ENCODE measurements at regions of chr10 and their contacts with region 1.

Region 1: DNA sequence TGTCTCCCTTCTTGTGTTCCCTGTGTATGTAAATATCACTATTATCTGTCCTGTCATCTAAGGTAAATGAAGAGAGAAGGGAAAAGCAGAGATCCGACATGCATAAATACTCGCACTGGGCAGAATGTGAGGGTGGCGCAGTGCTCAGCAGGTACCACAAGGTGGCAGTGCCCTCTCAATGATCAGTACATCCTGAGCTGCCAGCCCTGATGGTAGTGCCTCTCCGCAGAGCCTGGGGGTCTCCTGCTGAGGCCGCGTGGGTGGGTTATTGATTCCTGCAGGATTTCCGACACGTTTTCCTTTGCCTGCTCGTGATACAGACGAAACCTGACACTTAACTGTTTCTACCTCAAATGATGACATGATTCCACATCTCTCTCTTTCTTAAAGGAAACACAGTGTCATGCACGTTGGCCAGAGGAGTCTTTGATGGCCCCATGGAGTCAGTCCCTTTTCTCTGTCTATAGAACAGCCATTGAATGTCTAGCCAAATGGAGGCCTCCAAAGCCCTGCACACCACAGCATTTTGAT is 19.8 kb downstream of the RGR start:
- DNase-seq: peak; percentile 66
- H3K4me3 ChIP-seq: no peak overlapping the region
- H3K27ac ChIP-seq: no peak overlapping the region
- H3K4me1 ChIP-seq: no peaks in the 10 kb centered on the region
- CTCF ChIP-seq: peak; percentile 96

Region 2: DNA sequence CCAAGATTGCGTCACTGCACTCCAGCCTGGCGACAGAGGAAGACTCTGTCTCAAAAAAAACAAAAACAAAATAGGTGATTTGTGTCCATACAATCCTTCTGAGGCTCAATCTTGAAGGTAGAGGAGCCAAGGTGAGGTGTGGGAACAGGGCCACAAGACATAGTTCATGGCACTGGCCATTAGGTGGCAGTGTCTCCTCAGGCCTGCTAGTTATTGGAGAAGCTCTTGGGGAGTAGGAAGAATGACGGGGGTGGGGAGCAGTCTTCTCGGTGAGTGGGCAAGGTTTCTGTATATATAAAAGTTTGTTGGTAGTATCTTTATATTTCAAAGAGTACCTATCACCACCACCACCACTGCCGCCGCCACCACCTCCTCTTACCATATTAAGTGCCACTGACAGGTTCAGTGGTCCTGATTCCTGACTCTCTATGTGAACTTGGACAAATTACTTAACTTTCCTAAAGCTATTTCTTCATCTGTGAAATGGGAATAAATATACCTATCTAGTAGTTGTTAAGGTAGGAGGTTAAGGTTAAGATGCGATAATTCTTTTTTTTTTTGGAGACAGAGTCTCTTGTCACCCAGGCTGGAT is 87.7 kb after region 1 on chr10:
- CTCF ChIA-PET with region 1: no interaction called
- POLR2A ChIA-PET with region 1: no interaction called
- intact Hi-C with region 1: loop called (anchors 5 kb)
- DNase-seq: peak; percentile 51
- H3K4me3 ChIP-seq: no peak overlapping the region
- H3K27ac ChIP-seq: no peak overlapping the region
- H3K4me1 ChIP-seq: no peaks in the 10 kb centered on the region
- CTCF ChIP-seq: peak; percentile 83

Region 3: GRCh38 chr10:84375011-84375410 is 110.3 kb after region 1 on chr10:
- CTCF ChIA-PET with region 1: no interaction called
- POLR2A ChIA-PET with region 1: interaction called, 3 read pairs
- intact Hi-C with region 1: loop called (anchors 2 kb)
- DNase-seq: peak; percentile 57
- H3K4me3 ChIP-seq: no peak overlapping the region
- H3K27ac ChIP-seq: no peak overlapping the region
- H3K4me1 ChIP-seq: no peaks in the 10 kb centered on the region
- CTCF ChIP-seq: peak; percentile 93

Region 4: GRCh38 chr10:84429926-84430520 is 165.3 kb after region 1 on chr10:
- CTCF ChIA-PET with region 1: no interaction called
- POLR2A ChIA-PET with region 1: no interaction called
- intact Hi-C with region 1: loop called (anchors 10 kb)
- DNase-seq: peak; percentile 86
- H3K4me3 ChIP-seq: no peak overlapping the region
- H3K27ac ChIP-seq: no peak overlapping the region
- H3K4me1 ChIP-seq: peaks cover 4% of the 10 kb centered on the region
- CTCF ChIP-seq: peak; percentile 94

Region 5: DNA sequence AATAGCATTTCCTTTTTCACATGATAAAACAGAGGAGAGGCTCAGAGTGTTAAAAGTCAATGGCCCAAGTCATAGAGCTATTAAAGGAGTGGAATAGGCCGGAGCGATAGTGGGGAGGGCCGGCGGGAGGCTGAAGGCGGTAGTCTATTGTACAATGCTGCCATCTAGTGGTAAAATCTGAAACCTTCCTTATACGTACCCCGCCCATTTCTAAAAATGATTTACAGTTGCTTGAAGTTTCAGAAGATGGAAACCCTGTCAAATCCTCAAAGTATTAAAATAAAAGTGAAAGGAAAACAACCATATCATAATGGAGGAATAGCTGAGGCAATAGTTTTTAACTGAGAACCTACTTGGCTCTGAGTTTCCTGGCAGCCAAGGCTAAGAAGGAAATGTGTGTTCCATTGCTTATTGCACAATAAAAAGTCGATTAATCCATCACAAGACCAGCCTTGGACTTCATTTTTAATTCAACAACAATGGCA is 272.8 kb after region 1 on chr10:
- CTCF ChIA-PET with region 1: interaction called, 5 read pairs
- POLR2A ChIA-PET with region 1: interaction called, 5 read pairs
- intact Hi-C with region 1: loop called (anchors 1 kb)
- DNase-seq: peak; percentile 70
- H3K4me3 ChIP-seq: no peak overlapping the region
- H3K27ac ChIP-seq: no peak overlapping the region
- H3K4me1 ChIP-seq: no peaks in the 10 kb centered on the region
- CTCF ChIP-seq: peak; percentile 93

Measured in OCI-LY7 (cell line).